ENCODE measurements at regions of chr2 and their contacts with region 1.

Region 1: DNA sequence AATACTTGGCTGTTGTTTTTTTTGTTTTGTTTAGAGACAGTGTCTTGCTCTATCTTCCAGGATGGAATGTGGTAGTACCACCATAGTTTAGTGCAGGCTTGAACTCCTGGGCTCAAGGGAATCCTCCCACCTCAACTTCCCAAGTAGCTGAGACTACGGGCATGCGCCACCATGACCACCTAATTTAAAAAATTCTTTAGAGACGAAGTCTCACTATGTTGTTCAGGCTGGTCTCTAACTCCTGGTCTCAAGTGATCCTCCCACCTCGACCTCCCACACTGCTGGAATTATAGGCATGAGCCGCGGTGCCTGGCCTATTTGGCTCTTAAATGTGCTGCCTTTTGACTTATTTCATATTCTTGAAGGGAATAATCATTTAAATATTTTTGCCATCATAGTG is 60.1 kb downstream of the PTPN4 start:
- DNase-seq: no peak
- ATAC-seq: 0 out of 2 replicates have a peak, but pooled peaks have one; percentile 10
- H3K4me3 ChIP-seq: no peak overlapping the region
- H3K27ac ChIP-seq: no peak overlapping the region
- H3K4me1 ChIP-seq: peaks cover 1% of the 10 kb centered on the region
- H3K27me3 ChIP-seq: no peaks in the 10 kb centered on the region
- CTCF ChIP-seq: no peak
- POLR2A ChIP-seq: no peak
- RAD21 ChIP-seq: no peak

Region 2: DNA sequence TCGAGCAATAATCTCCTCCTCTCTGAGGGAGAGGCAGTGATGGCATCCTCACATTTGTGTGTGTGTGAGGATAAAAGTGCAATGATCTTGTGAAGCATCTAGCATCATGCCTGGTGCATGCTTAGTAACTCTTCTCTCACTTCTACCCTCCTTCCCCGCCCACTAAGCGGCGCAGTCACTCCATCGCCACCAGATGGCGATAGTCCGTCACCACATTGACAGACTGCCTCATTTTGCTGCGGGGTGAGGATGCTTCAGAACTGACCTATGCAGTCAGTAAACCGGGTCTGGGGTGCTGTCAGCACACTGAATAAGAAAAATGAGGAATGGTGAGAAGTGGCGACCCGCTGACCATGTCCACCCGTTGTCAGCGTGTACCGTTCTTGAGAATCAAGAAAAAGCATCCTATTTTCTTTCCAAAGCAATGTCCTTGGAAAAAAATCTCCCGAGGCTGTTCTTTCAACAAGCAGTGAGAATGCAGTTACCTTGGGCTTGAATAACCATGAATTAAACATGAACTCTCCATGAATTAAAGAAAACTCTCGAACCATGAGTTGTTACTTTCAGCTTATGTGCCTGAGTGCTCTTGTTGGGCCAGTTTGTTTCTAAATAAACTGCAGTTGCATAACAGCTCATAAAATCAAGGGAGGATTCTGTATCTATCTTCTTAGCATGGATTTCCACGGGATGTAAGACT is 178.1 kb before region 1 on chr2:
- CTCF ChIA-PET with region 1: no interaction called
- POLR2A ChIA-PET with region 1: no interaction called
- dilution Hi-C with region 1: no loop called
- in situ Hi-C with region 1: no loop called
- intact Hi-C with region 1: loop called (anchors 5 kb)
- DNase-seq: peak; percentile 71
- ATAC-seq: peak; percentile 96
- H3K4me3 ChIP-seq: no peak overlapping the region
- H3K27ac ChIP-seq: no peak overlapping the region
- H3K4me1 ChIP-seq: no peaks in the 10 kb centered on the region
- H3K27me3 ChIP-seq: peaks cover 21% of the 10 kb centered on the region
- CTCF ChIP-seq: peak; percentile 94
- POLR2A ChIP-seq: no peak
- RAD21 ChIP-seq: peak; percentile 86

Region 3: GRCh38 chr2:119759451-119760236 is 60.2 kb before region 1 on chr2 and contains the start of gene PTPN4:
- CTCF ChIA-PET with region 1: interaction called, 3 read pairs
- POLR2A ChIA-PET with region 1: no interaction called
- dilution Hi-C with region 1: no loop called
- in situ Hi-C with region 1: loop called (anchors 5 kb)
- intact Hi-C with region 1: no loop called
- DNase-seq: peak; percentile 98
- ATAC-seq: peak; percentile 95
- H3K4me3 ChIP-seq: peak within 1 kb of the TSS; percentile 80
- H3K27ac ChIP-seq: peak within 1 kb of the TSS; percentile 79
- H3K4me1 ChIP-seq: no peaks in the 10 kb centered on the region
- H3K27me3 ChIP-seq: no peaks in the 10 kb centered on the region
- CTCF ChIP-seq: no peak
- POLR2A ChIP-seq: 0 out of 2 replicates have a peak, but pooled peaks have one; percentile 39
- RAD21 ChIP-seq: no peak
- total RNA-seq, gene PTPN4: 13.6 and 19.2 TPM in 2 replicates

Region 4: DNA sequence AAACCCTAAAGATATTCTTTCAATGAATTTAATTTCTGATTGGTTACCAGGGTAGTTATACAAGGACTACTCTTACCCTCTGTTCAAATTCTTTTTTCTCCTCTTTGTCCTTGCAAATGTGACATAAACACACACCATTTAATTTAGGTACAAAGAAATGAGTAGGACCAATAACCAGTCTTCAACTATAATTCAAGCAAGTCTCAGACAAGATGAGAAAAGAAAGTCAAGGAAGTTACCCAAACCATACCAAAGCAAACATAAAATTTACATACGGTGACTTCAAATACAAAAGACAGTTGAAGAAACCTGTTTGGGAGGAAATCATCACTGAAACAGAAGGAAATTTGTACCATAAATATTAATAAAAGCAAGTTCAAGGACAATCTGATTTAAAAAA is 102.0 kb after region 1 on chr2:
- CTCF ChIA-PET with region 1: no interaction called
- POLR2A ChIA-PET with region 1: no interaction called
- dilution Hi-C with region 1: no loop called
- in situ Hi-C with region 1: no loop called
- intact Hi-C with region 1: no loop called
- DNase-seq: no peak
- ATAC-seq: no peak
- H3K4me3 ChIP-seq: no peak overlapping the region
- H3K27ac ChIP-seq: no peak overlapping the region
- H3K4me1 ChIP-seq: no peaks in the 10 kb centered on the region
- H3K27me3 ChIP-seq: no peaks in the 10 kb centered on the region
- CTCF ChIP-seq: no peak
- POLR2A ChIP-seq: no peak
- RAD21 ChIP-seq: no peak